ENCODE measurements at regions of chr6 and their contacts with region 1.

Region 1: DNA sequence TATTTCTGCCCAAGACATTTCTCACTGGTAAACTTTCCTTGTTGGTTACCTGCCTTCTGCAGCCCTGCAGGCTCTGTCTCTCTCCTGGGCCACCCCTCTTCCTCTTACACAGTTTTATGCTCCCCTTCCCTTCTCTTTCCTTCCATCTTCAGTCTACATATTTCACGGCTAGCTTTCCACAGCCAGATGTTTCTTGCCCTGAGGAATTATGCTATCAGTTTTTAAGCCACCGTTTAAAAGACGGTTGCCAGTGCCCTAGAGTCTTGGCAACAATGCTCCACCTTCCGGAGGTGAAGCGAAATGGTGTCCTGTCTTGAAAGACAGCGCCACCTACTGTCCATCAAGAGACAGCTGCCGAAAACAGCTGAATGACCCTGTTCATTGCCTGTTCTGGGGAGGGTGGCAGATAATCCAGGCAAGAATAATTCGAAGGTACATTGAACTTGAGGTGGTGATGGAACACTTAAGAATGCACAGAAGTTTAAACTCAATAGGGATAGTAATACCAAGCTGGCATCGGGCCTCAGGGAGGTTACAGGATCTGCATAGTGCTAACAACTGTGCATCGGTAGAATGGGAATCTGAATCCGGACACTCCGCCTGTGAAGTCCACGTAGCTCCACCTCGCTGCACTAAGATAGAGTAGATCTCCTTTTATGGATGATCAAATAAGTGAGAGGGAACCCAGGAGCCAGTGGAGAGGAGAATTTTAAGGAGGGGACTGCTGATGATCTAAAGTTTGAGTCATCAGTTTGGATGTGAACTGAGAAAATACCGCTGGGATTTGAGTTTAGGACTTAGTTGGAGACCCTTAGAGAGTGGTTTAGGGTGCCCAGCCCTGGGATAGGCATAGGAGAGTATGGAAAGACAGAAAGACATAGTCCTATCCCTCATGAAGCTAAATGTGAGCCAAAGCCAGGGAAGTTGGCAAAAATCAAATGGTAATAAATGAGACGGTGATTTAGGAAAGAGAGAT is 4.8 kb upstream of the TRIM40 start:
- DNase-seq: peak; percentile 81
- ATAC-seq: peak; percentile 94
- H3K4me3 Mint-ChIP-seq: no peak overlapping the region
- H3K27ac Mint-ChIP-seq: no peak overlapping the region
- H3K4me1 Mint-ChIP-seq: peaks cover 15% of the 10 kb centered on the region
- H3K27me3 Mint-ChIP-seq: peaks cover 66% of the 10 kb centered on the region

Region 2: DNA sequence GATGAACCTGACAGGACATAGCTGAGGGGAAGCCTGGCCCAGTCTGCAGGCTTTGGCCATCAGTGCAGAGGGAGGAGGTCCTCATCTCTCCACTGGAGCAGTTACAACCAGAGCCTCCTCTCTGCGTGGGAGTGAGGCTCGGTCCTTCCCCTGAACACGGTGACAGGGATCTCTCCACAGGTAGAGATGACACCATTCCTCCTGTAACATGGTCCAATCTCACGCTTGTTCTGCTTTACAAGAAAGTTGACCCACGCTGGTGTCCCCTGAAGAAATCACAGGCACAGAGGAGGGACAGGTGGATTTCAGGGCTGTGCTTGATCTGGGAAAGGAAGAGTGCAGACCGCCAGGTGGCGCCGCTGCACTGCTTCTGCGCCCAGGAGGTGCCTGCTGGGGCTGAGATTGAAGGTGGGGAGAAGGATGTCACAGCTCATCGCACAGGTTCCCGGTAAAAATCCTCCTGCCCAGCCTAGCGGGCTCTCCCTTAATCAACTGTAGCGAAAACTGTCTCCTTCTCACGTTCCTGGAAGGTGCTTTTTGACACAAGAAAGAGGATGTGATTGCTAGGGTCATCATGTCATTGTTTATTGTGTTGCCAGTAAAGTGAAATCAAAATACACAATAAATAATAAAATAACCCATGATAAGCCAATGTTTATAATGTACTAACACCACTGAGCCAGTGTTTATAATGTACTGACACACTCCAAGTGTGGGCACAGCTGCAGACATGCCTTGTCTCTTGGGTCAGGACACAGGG is 283.1 kb before region 1 on chr6:
- CTCF ChIA-PET with region 1: interaction called, 16 read pairs
- POLR2A ChIA-PET with region 1: no interaction called
- DNase-seq: peak; percentile 87
- ATAC-seq: peak; percentile 90
- H3K4me3 Mint-ChIP-seq: no peak overlapping the region
- H3K27ac Mint-ChIP-seq: no peak overlapping the region
- H3K4me1 Mint-ChIP-seq: peaks cover 16% of the 10 kb centered on the region
- H3K27me3 Mint-ChIP-seq: peaks cover 58% of the 10 kb centered on the region

Region 3: GRCh38 chr6:30075161-30075986 is 55.8 kb before region 1 on chr6 and contains the start of gene RNF39:
- CTCF ChIA-PET with region 1: interaction called, 11 read pairs
- POLR2A ChIA-PET with region 1: no interaction called
- DNase-seq: peak; percentile 32
- ATAC-seq: no peak
- H3K4me3 Mint-ChIP-seq: peak within 1 kb of the TSS; percentile 43
- H3K27ac Mint-ChIP-seq: no peak within 1 kb of the TSS
- H3K4me1 Mint-ChIP-seq: peaks cover 50% of the 10 kb centered on the region
- H3K27me3 Mint-ChIP-seq: peaks cover 78% of the 10 kb centered on the region
- total RNA-seq, gene RNF39: not detected

Region 4: DNA sequence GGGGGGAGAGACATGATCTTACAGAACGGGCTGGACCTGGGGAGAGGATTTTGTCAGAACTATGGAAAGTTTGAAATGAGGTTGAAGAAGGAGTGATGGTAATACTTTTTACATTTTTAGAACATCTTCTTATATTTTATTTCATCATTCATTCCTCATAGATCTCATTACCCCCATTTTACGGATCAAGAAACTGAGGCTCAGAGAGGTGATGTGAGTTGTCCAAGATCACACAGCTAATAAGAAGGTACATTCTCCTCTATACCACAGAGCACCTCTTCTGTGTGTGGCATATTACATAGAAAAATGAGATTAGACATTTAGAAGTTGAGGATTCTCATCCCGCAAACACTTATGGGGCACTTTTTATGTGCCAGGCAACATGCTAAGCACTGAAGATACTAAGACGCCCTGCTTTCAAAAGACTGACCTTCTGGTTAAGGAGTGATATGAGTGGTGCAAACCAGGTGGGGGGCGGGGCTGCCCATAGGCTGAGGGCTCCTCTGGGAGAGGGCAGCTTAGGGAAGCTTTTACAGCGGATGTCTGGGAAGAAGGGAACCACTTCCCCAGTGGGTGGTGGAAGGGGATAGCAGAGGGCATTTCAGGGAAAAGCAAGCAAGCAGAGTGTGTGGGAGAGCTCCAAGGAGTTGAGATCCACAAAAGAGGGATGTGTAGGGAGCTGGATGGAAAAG is 38.2 kb before region 1 on chr6:
- CTCF ChIA-PET with region 1: interaction called, 15 read pairs
- POLR2A ChIA-PET with region 1: no interaction called
- DNase-seq: no peak
- ATAC-seq: no peak
- H3K4me3 Mint-ChIP-seq: no peak overlapping the region
- H3K27ac Mint-ChIP-seq: no peak overlapping the region
- H3K4me1 Mint-ChIP-seq: peaks cover 7% of the 10 kb centered on the region
- H3K27me3 Mint-ChIP-seq: peaks cover 69% of the 10 kb centered on the region

Region 5: GRCh38 chr6:30143780-30144179 is 12.6 kb after region 1 on chr6:
- CTCF ChIA-PET with region 1: interaction called, 38 read pairs
- POLR2A ChIA-PET with region 1: no interaction called
- DNase-seq: no peak
- ATAC-seq: no peak
- H3K4me3 Mint-ChIP-seq: no peak overlapping the region
- H3K27ac Mint-ChIP-seq: no peak overlapping the region
- H3K4me1 Mint-ChIP-seq: peaks cover 7% of the 10 kb centered on the region
- H3K27me3 Mint-ChIP-seq: peaks cover 53% of the 10 kb centered on the region

Measured in activated CD8-positive, alpha-beta T cell treated with anti-CD3 and anti-CD28 coated beads, Interleukin-2, amount 10 ng/mL, durations not matched to agents 7 days and 5 days (primary cell).